HEK293T (cell line): ENCODE measurements at regions of chr22 and their contacts with region 1.

Region 1: DNA sequence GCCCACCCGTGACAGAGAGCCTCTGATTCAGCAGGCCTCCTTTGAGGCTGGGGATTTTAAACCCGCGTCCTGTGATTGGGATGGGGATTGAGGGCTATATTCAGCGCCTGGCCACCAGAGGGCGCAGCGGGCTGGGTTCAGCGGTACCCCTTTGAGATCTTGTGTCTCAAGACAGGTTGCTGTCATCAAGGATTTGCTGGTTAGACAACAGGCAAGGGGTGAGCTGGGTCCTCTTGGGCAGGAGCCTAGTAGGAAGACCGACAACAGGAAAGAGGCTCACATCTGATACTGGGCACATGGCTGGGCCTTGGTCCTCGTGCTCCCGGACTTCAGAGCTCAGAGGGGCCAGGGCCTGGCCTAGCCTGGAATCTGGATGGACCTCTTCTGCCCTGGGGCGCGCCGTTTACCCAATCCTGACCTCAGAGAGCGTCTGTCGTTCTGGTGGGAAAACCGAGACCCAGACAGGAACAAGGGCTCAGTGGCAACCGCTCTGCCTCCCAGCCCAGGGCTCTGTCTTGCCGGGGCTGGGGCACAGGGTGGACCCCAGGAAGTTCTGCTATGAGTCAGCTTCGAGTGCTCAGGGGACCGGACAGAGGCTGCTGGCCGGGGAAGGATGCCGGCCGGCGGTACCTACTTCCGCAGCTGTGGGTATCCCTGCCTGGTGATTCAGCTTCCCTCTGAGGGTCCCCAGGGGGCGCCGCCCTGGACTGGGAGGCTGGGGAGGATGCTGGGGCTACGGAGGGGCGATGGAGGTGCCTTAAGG is 929 bp upstream of the SLC35E4 start:
- DNase-seq: peak; percentile 93

Region 2: DNA sequence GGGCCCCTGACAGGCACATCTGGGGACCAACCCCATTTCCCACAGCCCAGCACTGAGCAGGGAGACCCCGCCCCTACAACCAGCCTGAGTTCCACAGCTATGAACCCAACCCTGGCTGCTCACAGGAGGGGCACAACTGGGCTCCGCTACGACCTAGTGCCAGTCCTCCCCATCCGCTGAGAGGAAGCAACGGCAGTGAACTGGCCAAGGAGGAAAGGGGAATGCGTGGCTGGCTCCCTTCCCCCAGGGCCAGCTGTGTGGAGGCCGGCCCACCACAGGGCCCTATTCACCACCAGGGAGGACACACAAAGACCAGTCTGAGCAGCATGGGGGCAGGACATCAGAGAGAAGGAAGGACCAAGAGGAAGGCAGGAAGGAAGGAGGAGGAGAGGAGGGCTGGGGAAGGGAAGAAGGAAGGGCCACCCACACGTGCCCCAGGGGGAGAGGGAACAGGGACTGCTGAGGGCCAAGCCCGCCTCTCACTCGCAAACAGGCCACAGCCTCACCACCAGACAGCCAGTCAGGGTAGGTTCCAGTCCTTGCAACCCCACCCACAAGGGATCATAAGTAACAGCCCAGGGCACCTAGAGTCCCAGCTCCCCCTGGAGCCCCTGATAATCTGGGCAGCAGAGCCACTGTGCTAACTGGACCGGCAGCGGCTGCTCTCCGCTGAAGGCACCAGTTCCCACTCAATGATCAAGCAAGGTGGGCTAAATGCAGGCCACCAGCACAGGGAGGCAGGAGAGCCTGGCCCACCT is 51.7 kb before region 1 on chr22:
- CTCF ChIA-PET with region 1: no interaction called
- POLR2A ChIA-PET with region 1: no interaction called
- DNase-seq: no peak

Region 3: GRCh38 chr22:30747493-30747892 is 112.8 kb after region 1 on chr22:
- CTCF ChIA-PET with region 1: interaction called, 10 read pairs
- POLR2A ChIA-PET with region 1: no interaction called
- DNase-seq: no peak

Region 4: GRCh38 chr22:30754971-30755756 is 120.5 kb after region 1 on chr22:
- CTCF ChIA-PET with region 1: interaction called, 45 read pairs
- POLR2A ChIA-PET with region 1: interaction called, 6 read pairs
- DNase-seq: peak; percentile 78